HEK293 (cell line): ENCODE measurements at regions of chr17 and their contacts with region 1.

Region 1: GRCh38 chr17:81512560-81513371 is at the start of gene ACTG1:
- H3K4me3 ChIP-seq: peak within 1 kb of the TSS; percentile 92
- H3K27ac ChIP-seq: peak within 1 kb of the TSS; percentile 100
- H3K4me1 ChIP-seq: peaks cover 17% of the 10 kb centered on the region
- CTCF ChIP-seq: no peak

Region 2: GRCh38 chr17:81394921-81395599 is 117.7 kb before region 1 on chr17 and contains the start of gene BAHCC1:
- CTCF ChIA-PET with region 1: interaction called, 3 read pairs
- POLR2A ChIA-PET with region 1: interaction called, 85 read pairs
- H3K4me3 ChIP-seq: peak within 1 kb of the TSS; percentile 92
- H3K27ac ChIP-seq: peak within 1 kb of the TSS; percentile 100
- H3K4me1 ChIP-seq: peaks cover 23% of the 10 kb centered on the region
- CTCF ChIP-seq: peak; percentile 32; the same call in 1 of the 2 replicates

Region 3: DNA sequence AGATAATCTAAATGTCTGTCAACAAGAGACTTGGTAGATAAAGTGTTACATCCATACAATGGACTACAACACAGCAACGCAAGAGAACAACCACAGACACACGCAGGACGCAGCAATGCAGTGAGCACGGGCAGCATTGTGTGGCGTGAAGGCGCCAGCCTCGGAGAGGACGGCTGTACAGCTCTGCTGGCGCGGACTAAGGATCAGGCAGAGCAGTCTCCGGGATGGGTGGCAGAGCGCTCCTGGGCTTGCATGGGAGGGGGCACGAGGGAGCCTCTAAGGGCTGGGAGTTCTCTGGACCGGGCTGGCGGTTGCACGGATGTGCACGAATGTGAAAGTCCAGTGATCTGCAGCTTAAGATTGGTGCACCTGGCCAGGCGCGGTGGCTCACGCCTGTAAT is 34.6 kb before region 1 on chr17:
- CTCF ChIA-PET with region 1: no interaction called
- POLR2A ChIA-PET with region 1: no interaction called
- H3K4me3 ChIP-seq: no peak overlapping the region
- H3K27ac ChIP-seq: no peak overlapping the region
- H3K4me1 ChIP-seq: no peaks in the 10 kb centered on the region
- CTCF ChIP-seq: no peak

Region 4: GRCh38 chr17:81491181-81491581 is 21.6 kb before region 1 on chr17:
- CTCF ChIA-PET with region 1: no interaction called
- POLR2A ChIA-PET with region 1: interaction called, 27 read pairs
- H3K4me3 ChIP-seq: no peak overlapping the region
- H3K27ac ChIP-seq: no peak overlapping the region
- H3K4me1 ChIP-seq: peaks cover 11% of the 10 kb centered on the region
- CTCF ChIP-seq: no peak

Region 5: DNA sequence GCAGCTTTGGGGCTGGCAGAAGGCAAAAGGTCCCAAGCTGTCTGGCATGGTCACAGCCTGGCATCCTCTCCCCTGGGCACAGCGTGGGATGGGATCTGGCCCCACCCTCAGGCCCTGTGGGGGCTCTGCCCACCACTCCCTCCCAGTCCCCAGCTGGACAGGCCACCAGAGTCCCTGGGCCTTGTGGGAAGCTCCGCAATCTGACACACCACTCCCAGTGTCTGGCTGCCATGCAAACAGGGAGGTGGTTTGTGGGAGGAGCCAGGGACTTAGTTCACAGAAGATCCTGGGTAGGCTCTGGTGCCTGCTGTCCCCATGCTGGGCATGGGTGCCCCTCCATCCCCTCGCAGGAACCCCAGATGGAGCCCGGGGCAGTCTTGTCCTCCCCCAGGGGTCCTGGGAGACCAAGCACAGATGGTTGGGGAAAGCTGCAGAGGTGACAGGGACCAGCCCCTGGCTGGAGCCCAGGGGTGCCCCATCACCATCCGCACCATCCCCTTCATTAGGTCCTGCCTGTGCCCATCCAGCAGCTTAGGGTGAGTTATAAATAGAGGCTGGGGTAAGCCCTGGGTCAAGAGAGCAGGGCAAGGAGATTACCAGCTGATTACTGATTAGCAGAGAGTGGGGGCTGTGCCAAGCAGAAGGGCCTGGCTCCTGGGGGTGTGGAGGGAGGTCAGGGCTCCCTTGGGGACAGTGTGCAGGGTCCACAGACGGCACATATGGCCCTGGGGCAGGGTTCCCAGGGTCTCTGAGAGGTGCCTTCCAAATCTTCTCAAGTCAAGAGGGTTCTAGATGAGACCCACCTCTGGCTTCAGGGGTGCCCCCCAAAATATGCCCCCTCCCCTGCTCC is 21.6 kb after region 1 on chr17:
- CTCF ChIA-PET with region 1: interaction called, 3 read pairs
- POLR2A ChIA-PET with region 1: interaction called, 10 read pairs
- H3K4me3 ChIP-seq: no peak overlapping the region
- H3K27ac ChIP-seq: no peak overlapping the region
- H3K4me1 ChIP-seq: no peaks in the 10 kb centered on the region
- CTCF ChIP-seq: no peak

Region 6: GRCh38 chr17:81566461-81567126 is 53.8 kb after region 1 on chr17:
- CTCF ChIA-PET with region 1: interaction called, 3 read pairs
- POLR2A ChIA-PET with region 1: interaction called, 11 read pairs
- H3K4me3 ChIP-seq: no peak overlapping the region
- H3K27ac ChIP-seq: peak overlapping the region; percentile 88
- H3K4me1 ChIP-seq: peaks cover 23% of the 10 kb centered on the region
- CTCF ChIP-seq: no peak